Caco-2 (cell line): ENCODE measurements at regions of chr1 and their contacts with region 1.

Region 1: DNA sequence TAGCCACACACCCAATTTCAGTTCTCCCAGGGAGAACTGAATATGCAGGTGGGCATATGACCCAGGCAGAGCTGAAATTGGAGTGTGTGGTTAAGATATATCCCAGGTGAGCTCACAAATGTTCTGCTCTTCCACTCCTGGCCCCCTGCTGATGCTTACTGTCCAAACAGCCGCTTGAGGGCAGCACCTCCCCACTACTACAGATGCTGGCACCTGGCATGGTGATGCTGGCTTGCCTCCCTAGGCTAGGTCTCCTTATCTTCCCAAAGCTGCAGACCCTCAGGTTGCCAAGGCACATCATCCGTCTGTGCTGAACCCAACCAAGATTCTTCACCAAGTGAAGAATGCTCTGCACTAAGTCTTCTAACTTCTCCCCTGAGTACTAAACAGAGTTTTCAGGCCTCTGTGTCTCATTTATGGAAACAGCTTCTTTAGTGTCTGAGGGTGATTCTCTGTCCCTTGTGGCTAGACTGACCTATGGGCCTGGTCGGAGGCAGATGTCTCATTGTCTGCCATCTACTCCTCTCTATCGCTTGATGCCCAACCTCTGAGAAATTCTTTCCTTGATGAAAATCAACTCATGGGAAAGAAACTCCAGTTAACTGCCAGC is 27.2 kb downstream of the XCL1 start:
- DNase-seq: peak; percentile 79 to 81
- H3K4me3 ChIP-seq: no peak overlapping the region
- H3K4me3 Mint-ChIP-seq: no peak overlapping the region
- H3K27ac Mint-ChIP-seq: no peak overlapping the region
- H3K4me1 ChIP-seq: peaks cover 4% of the 10 kb centered on the region; the same call in 1 of the 2 replicates
- H3K4me1 Mint-ChIP-seq: peaks cover 11% of the 10 kb centered on the region
- H3K27me3 ChIP-seq: no peaks in the 10 kb centered on the region
- H3K27me3 Mint-ChIP-seq: no peaks in the 10 kb centered on the region
- CTCF ChIP-seq: peak; percentile 87 to 89

Region 2: DNA sequence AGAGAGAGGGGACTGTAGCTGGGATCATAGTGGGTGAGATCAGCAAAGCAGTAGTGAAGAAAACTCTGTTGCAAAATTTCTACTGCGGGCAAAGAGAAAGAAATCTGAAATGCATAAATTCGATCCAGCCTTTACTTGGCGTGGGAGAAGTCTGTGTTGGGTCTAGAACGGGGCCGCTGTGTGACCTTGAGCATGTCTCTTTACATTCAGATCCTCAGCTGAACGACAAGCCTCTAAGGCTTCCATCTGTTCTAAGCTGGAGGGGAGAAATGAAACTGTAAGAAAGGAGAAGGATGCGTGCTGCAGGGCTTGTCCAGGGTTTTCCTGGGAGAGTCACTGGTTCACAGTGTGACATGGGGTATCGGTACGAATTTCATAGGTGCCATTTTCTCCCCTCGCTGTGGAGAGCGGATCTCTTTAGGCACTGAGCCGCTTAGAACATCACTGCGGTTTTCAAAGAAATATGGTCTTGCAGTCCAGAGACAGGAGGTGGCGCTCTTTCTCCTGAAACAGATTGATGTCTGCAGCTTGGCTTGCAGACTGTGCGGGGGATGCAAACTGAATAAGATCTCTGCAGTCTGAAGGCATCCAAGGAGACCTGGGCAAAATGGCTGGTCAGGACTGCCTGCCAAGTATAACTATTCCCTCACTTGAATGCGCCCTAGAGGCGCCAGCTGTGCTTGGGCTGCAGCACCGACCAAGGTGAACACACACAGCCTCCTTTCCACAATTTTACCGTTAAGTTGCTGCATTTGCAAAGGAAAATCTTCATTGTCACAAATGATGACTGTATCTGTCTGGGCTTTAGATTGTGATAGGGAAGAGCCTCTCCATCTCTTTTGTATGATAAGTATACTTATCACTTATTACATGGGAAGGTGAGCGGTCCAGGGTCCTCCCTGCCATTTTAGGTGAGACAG is 163.9 kb before region 1 on chr1:
- CTCF ChIA-PET with region 1: interaction called, 6 read pairs
- POLR2A ChIA-PET with region 1: no interaction called
- intact Hi-C with region 1: loop called (anchors 1 kb)
- DNase-seq: peak; percentile 73 to 76
- H3K4me3 ChIP-seq: no peak overlapping the region
- H3K4me3 Mint-ChIP-seq: no peak overlapping the region
- H3K27ac Mint-ChIP-seq: no peak overlapping the region
- H3K4me1 ChIP-seq: peaks cover 8% of the 10 kb centered on the region; the same call in 1 of the 2 replicates
- H3K4me1 Mint-ChIP-seq: peaks cover 29% of the 10 kb centered on the region
- H3K27me3 ChIP-seq: no peaks in the 10 kb centered on the region
- H3K27me3 Mint-ChIP-seq: no peaks in the 10 kb centered on the region
- CTCF ChIP-seq: peak; percentile 68 to 80

Region 3: DNA sequence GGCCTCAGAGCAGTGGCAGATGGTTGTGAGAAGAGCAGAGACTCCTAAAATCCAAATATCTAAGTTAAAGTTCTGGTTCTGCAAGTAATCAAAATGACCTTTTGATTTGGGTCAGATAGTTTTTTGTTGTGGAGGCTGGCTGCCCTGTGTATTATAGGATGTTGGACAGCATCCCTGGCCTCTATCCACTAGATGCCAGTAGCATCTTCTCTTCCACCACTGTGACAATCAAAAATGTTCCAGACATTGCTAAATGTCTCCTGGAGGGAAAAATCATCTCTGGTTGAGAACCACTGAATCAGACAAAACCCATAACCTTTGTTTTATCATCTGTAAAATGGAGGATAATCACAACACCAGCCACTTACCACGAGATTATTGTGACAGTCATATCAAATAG is 131.3 kb after region 1 on chr1:
- CTCF ChIA-PET with region 1: interaction called, 5 read pairs
- POLR2A ChIA-PET with region 1: no interaction called
- intact Hi-C with region 1: loop called (anchors 1 kb)
- DNase-seq: peak in 1 of 2 experiments; percentile 13
- H3K4me3 ChIP-seq: no peak overlapping the region
- H3K4me3 Mint-ChIP-seq: no peak overlapping the region
- H3K27ac Mint-ChIP-seq: peak overlapping the region; percentile 21
- H3K4me1 ChIP-seq: no peaks in the 10 kb centered on the region
- H3K4me1 Mint-ChIP-seq: peaks cover 9% of the 10 kb centered on the region
- H3K27me3 ChIP-seq: no peaks in the 10 kb centered on the region
- H3K27me3 Mint-ChIP-seq: no peaks in the 10 kb centered on the region
- CTCF ChIP-seq: peak; percentile 21 to 34

Region 4: GRCh38 chr1:169133801-169134502 is 530.3 kb after region 1 on chr1:
- CTCF ChIA-PET with region 1: interaction called, 5 read pairs
- POLR2A ChIA-PET with region 1: no interaction called
- intact Hi-C with region 1: loop called (anchors 5 kb)
- DNase-seq: no peak
- H3K4me3 ChIP-seq: no peak overlapping the region
- H3K4me3 Mint-ChIP-seq: no peak overlapping the region
- H3K27ac Mint-ChIP-seq: peak overlapping the region; percentile 32
- H3K4me1 ChIP-seq: no peaks in the 10 kb centered on the region
- H3K4me1 Mint-ChIP-seq: no peaks in the 10 kb centered on the region
- H3K27me3 ChIP-seq: no peaks in the 10 kb centered on the region
- H3K27me3 Mint-ChIP-seq: no peaks in the 10 kb centered on the region
- CTCF ChIP-seq: peak in 1 of 2 experiments; percentile 15

Region 5: DNA sequence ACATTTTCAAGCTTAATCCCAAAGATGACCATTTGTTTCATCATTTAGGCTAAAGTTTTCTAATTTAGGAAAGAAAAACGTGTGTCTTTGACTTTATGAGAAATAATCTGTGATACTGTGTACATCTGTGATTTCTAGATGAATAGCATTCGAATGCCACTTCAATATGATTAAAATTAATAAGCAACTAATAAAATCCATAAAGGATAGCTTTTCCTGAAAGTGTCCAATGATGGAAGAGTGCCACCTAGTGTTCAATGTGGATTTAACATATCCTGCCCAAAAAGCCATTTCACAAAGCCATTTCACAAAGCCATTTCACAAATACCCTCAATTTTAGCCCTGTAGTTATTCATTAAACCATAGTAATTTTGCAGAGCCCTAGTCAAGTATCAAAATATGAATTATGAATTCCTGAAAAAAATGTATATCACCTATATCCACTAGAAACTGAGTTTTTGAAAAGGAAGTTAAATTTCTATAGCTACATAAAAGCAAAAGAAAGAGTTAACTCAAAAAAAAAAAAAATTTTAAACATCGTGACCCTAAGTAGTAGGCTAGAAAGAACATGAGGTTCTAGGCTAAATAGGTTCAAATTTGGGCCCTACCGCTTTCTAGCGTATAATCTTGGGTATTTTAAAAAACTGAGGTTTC is 744.9 kb after region 1 on chr1:
- CTCF ChIA-PET with region 1: interaction called, 41 read pairs
- POLR2A ChIA-PET with region 1: interaction called, 3 read pairs
- intact Hi-C with region 1: loop called (anchors 1 kb)
- DNase-seq: peak in 1 of 2 experiments; percentile 62
- H3K4me3 ChIP-seq: no peak overlapping the region
- H3K4me3 Mint-ChIP-seq: no peak overlapping the region
- H3K27ac Mint-ChIP-seq: no peak overlapping the region
- H3K4me1 ChIP-seq: peaks cover 30% of the 10 kb centered on the region
- H3K4me1 Mint-ChIP-seq: peaks cover 34% of the 10 kb centered on the region
- H3K27me3 ChIP-seq: no peaks in the 10 kb centered on the region
- H3K27me3 Mint-ChIP-seq: no peaks in the 10 kb centered on the region
- CTCF ChIP-seq: peak; percentile 67 to 78